Dendritic cell treated with granulocyte-macrophage colony-stimulating factor and Interleukin-4, amounts not matched to agents 40 ng/mL and 50 ng/mL, for 4 days (primary cell): ENCODE measurements at regions of chr11 and their contacts with region 1.

Region 1: DNA sequence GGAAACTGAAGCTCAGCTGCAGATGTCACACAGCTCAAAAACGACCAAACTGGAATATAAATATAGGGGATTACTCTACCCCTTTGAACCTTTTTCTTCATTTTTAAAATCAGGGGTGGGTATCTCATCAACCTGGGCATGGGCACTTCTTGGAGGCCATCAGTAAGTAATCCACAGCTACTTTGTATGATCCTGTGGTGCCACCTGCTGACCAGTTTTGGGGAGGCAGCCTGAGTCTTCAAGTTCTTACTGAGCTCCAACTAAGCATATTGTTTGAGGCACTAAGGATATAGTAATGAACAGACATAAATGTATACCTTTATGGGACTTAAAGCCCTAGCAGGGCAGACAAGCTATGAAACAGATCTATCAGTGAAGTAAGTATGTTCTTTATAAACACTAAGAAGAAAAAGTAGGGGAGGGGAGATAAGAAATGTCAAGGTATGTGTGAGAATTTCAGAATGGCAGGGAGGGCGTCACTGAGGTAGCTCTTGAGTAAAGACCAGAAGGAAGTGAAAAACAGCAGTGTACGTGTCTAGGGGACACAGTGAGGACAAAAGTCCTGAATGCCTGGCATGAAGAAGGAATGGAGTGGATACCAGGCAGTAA is 18.4 kb downstream of the TUB start:
- H3K4me3 Mint-ChIP-seq: no peak overlapping the region
- H3K27ac Mint-ChIP-seq: no peak overlapping the region
- H3K4me1 Mint-ChIP-seq: no peaks in the 10 kb centered on the region
- H3K27me3 Mint-ChIP-seq: no peaks in the 10 kb centered on the region

Region 2: GRCh38 chr11:7098235-7098832 is 1001.1 kb before region 1 on chr11:
- intact Hi-C with region 1: loop called (anchors 10 kb)
- H3K4me3 Mint-ChIP-seq: no peak overlapping the region
- H3K27ac Mint-ChIP-seq: no peak overlapping the region
- H3K4me1 Mint-ChIP-seq: no peaks in the 10 kb centered on the region
- H3K27me3 Mint-ChIP-seq: peaks cover 5% of the 10 kb centered on the region

Region 3: GRCh38 chr11:7892840-7893254 is 206.5 kb before region 1 on chr11:
- intact Hi-C with region 1: loop called (anchors 10 kb)
- H3K4me3 Mint-ChIP-seq: no peak overlapping the region
- H3K27ac Mint-ChIP-seq: no peak overlapping the region
- H3K4me1 Mint-ChIP-seq: no peaks in the 10 kb centered on the region
- H3K27me3 Mint-ChIP-seq: peaks cover 18% of the 10 kb centered on the region

Region 4: DNA sequence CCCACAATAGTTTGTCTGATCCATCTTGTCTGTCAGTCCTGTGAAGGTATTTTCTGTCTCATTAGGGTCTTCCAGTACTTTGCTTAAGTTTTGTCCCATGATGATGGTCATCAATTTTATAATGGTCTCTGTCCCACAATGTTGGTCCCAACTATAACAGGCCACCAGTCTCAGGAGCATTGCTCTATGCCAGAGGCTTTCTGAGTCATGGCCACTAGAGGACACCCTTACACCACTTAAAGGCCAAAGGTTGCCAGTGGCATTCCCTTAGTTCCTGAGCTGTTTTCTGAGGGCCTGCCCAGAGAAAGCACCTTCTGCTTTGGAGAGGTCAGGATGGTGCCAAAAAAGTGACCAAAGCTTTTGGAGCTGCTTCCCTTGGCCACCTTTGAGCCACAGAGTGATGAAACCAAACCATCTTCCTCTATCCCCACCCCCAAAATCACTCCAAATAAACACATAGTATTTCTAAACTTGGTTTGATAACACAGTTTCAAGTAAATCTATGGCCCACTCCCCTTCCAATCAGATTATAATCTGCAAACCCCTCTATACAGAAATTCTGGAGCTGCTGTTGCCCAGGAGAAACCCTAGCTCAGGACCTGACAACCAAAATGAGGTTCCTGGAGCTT is 92.9 kb before region 1 on chr11:
- intact Hi-C with region 1: loop called (anchors 1 kb)
- H3K4me3 Mint-ChIP-seq: no peak overlapping the region
- H3K27ac Mint-ChIP-seq: no peak overlapping the region
- H3K4me1 Mint-ChIP-seq: peaks cover 4% of the 10 kb centered on the region
- H3K27me3 Mint-ChIP-seq: peaks cover 2% of the 10 kb centered on the region

Region 5: GRCh38 chr11:8033305-8034105 is 65.9 kb before region 1 on chr11:
- intact Hi-C with region 1: loop called (anchors 1 kb)
- H3K4me3 Mint-ChIP-seq: no peak overlapping the region
- H3K27ac Mint-ChIP-seq: no peak overlapping the region
- H3K4me1 Mint-ChIP-seq: peaks cover 5% of the 10 kb centered on the region
- H3K27me3 Mint-ChIP-seq: peaks cover 17% of the 10 kb centered on the region

Region 6: DNA sequence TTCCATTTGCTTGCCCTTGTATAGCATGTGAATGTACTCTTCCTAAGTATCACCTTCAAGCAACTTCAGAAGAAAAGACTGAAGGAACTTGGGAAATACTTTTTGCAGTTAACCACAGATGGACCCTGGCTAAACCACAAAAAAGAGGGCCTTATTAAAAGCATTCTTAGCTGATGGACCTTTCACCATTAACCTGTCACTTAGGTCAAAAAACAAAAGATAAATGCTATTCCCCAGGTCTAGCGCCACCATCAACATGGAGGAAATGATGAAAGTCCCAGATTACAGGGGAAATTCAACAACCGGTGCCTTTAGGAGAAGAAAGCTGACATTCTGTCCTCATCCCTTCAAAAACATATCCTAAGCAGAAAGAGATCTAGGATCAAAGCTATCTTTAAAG is 465.1 kb after region 1 on chr11:
- intact Hi-C with region 1: no loop called
- H3K4me3 Mint-ChIP-seq: no peak overlapping the region
- H3K27ac Mint-ChIP-seq: no peak overlapping the region
- H3K4me1 Mint-ChIP-seq: no peaks in the 10 kb centered on the region
- H3K27me3 Mint-ChIP-seq: peaks cover under 1% of the 10 kb centered on the region